ENCODE measurements at regions of chr7 and their contacts with region 1.

Region 1: DNA sequence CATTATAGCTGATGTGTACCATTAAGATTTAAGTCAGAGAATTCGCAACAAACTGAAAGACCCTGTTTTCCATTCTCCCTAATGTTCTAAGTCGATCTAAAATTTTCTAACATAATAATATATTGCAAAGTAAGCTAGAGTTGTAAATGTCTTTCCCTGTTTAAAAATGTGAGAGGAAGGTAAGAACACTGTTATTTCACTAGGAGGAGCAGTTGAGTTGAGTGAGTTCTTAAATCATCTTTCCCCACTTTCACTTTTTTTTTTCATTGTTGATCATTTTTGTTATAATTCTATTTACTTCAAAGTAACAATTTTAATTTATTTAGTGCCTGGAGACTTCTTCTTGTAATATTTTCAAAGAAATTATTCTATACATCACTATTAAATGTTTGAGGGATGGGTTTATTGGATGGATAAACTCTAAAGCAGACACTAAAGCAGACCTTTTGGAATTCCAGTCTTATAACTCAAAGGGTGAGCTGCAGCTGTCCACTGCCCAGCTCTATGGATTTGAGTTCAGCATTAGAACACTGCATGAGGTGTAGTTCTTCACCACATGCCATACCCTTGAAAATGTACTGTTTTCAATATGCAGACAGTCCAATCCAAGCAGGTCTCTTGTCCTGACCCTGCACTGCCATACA is 181.3 kb upstream of the FZD1 start:
- DNase-seq: peak; percentile 41
- H3K4me3 ChIP-seq: no peak overlapping the region
- H3K27ac ChIP-seq: no peak overlapping the region
- H3K4me1 ChIP-seq: no peaks in the 10 kb centered on the region
- H3K27me3 ChIP-seq: no peaks in the 10 kb centered on the region
- CTCF ChIP-seq: peak; percentile 31 to 47
- POLR2A ChIP-seq: no peak

Region 2: GRCh38 chr7:91071537-91071936 is 11.4 kb before region 1 on chr7:
- CTCF ChIA-PET with region 1: no interaction called
- POLR2A ChIA-PET with region 1: no interaction called
- dilution Hi-C with region 1: no loop called
- intact Hi-C with region 1: no loop called
- DNase-seq: no peak
- H3K4me3 ChIP-seq: no peak overlapping the region
- H3K27ac ChIP-seq: no peak overlapping the region
- H3K4me1 ChIP-seq: no peaks in the 10 kb centered on the region
- H3K27me3 ChIP-seq: no peaks in the 10 kb centered on the region
- CTCF ChIP-seq: no peak
- POLR2A ChIP-seq: no peak

Region 3: GRCh38 chr7:91103355-91103754 is 20.4 kb after region 1 on chr7:
- CTCF ChIA-PET with region 1: no interaction called
- POLR2A ChIA-PET with region 1: no interaction called
- dilution Hi-C with region 1: no loop called
- intact Hi-C with region 1: no loop called
- DNase-seq: no peak
- H3K4me3 ChIP-seq: no peak overlapping the region
- H3K27ac ChIP-seq: no peak overlapping the region
- H3K4me1 ChIP-seq: no peaks in the 10 kb centered on the region
- H3K27me3 ChIP-seq: no peaks in the 10 kb centered on the region
- CTCF ChIP-seq: no peak
- POLR2A ChIP-seq: no peak

Region 4: GRCh38 chr7:91636129-91636724 is 553.3 kb after region 1 on chr7:
- CTCF ChIA-PET with region 1: interaction called, 6 read pairs
- POLR2A ChIA-PET with region 1: no interaction called
- dilution Hi-C with region 1: no loop called
- intact Hi-C with region 1: loop called (anchors 1 kb)
- DNase-seq: peak; percentile 57
- H3K4me3 ChIP-seq: no peak overlapping the region
- H3K27ac ChIP-seq: no peak overlapping the region
- H3K4me1 ChIP-seq: peaks cover 6% of the 10 kb centered on the region
- H3K27me3 ChIP-seq: peaks cover 0 to 3% of the 10 kb centered on the region in 2 experiments
- CTCF ChIP-seq: peak; percentile 58 to 65
- POLR2A ChIP-seq: no peak

Region 5: GRCh38 chr7:91784463-91784862 is 701.5 kb after region 1 on chr7:
- CTCF ChIA-PET with region 1: interaction called, 23 read pairs
- POLR2A ChIA-PET with region 1: no interaction called
- dilution Hi-C with region 1: no loop called
- intact Hi-C with region 1: loop called (anchors 1 kb)
- DNase-seq: peak; percentile 37
- H3K4me3 ChIP-seq: no peak overlapping the region
- H3K27ac ChIP-seq: no peak overlapping the region
- H3K4me1 ChIP-seq: no peaks in the 10 kb centered on the region
- H3K27me3 ChIP-seq: peaks cover 3 to 8% of the 10 kb centered on the region in 2 experiments
- CTCF ChIP-seq: peak in 1 of 2 donors; percentile 9
- POLR2A ChIP-seq: no peak

Region 6: GRCh38 chr7:92044940-92045339 is 962.0 kb after region 1 on chr7:
- CTCF ChIA-PET with region 1: no interaction called
- POLR2A ChIA-PET with region 1: no interaction called
- dilution Hi-C with region 1: no loop called
- intact Hi-C with region 1: loop called (anchors 5 kb)
- DNase-seq: no peak
- H3K4me3 ChIP-seq: no peak overlapping the region
- H3K27ac ChIP-seq: no peak overlapping the region
- H3K4me1 ChIP-seq: no peaks in the 10 kb centered on the region
- H3K27me3 ChIP-seq: no peaks in the 10 kb centered on the region
- CTCF ChIP-seq: no peak
- POLR2A ChIP-seq: no peak

Measured in endothelial cell of umbilical vein (primary cell).